ENCODE measurements at regions of chr1 and their contacts with region 1.

Region 1: DNA sequence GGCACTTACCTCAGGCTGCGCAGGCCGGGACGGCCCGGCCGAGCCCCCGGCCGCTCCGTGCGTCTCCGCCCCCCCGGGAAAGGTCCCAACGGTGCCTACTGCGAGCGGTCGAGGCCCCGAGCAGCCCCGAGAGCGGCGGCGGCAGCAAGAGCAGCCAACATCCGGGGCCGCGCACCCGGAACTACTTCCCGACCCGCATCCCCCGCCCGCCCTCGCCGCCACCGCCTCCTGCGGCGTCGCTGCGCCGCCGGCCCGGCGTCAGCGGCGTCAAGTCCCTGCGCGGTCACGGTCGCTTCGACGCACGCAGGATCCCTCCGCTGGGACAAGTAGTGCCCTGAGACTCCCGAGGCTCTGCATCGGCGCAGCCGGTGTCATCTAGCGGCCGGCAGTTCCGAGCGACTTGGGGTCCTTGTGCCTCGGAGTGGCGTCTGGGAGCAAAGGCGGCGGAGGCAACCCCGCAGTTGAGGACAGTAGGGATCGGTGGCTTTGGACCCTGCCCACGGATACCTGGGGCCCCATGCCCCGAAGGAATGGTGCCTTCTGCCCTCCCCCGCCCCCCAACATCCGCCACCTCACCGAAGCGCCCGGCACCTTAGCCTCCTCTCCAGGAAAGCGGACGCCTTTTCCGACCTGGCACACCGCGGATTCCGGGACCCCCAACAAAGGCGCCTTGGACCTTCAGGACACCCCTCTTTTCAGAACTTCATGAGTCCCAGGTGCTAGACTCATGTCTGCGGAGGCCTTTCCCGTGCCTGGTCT is at the start of gene FOXJ3:
- DNase-seq: peak; percentile 94
- ATAC-seq: peak; percentile 95 to 97
- total RNA-seq, gene FOXJ3: 34.3 to 43.0 TPM

Region 2: GRCh38 chr1:42173155-42173933 is 161.9 kb before region 1 on chr1:
- intact Hi-C with region 1: loop called (anchors 5 kb)
- DNase-seq: peak; percentile 60
- ATAC-seq: peak; percentile 66 to 67

Region 3: GRCh38 chr1:42430286-42431135 is 95.3 kb after region 1 on chr1:
- intact Hi-C with region 1: no loop called
- DNase-seq: no peak
- ATAC-seq: no peak

Region 4: GRCh38 chr1:42456010-42456758 is 121.0 kb after region 1 on chr1 and contains the starts of genes PPCS and ZMYND12:
- intact Hi-C with region 1: loop called in 1 of 2 experiments (anchors 10 kb)
- DNase-seq: peak; percentile 90
- ATAC-seq: peak; percentile 95 to 98
- total RNA-seq, gene PPCS: 33.5 to 36.8 TPM
- total RNA-seq, gene ZMYND12: 0.31 to 0.65 TPM

Region 5: DNA sequence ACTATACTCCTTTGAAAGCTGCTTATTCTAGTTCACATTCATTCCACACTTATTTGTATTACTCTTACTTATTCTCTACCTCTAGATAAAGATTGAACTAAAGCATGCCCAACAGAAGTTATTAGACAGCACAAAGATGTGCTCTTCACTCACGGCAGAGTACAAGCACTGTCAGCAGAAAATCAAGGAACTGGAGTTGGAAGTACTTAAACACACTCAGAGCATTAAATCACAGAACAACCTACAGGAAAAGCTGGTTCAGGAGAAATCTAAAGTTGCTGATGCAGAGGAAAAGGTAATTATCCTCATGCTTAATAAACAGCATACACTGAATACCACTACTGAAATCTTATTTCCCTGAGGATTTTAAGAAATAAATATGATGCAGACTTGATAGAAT is 241.7 kb after region 1 on chr1:
- intact Hi-C with region 1: loop called in 1 of 2 experiments (anchors 10 kb)
- DNase-seq: no peak
- ATAC-seq: no peak

Region 6: DNA sequence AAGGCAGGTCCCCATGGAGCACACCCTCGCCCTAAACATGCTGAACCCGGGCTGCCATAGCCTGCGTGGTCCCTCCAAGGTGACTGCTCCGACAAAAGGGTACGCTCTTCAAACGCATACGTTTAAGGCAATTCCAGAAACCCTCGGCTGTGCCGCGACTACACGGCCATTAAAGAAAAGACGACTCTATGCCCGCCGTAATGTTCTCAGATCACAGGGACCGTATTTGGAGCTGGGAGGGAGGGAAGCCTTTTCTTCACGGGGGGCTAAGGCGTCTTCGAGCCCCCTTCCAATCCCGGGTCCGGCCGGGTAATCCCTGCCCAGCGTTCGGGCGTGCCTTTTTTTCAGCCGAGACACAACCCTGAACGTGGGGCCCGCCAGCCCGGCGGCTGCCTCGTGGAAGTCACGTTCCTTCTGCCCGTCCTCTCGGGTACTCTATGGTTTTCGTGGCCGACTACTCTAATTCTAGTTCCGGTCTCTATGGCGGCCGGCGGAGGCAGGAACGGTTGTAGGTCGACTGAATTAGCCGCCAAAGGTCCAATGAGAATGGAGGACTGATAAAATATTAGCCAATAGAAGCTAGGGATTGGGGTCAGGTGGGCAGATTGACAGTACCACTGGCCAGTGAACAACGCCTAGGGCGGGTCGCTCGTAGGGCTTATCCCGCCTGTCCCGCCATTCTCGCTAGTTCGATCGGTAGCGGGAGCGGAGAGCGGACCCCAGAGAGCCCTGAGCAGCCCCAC is 346.7 kb after region 1 on chr1 and contains the start of gene YBX1:
- intact Hi-C with region 1: loop called in 1 of 2 experiments (anchors 10 kb)
- DNase-seq: peak; percentile 96
- ATAC-seq: peak; percentile 98
- total RNA-seq, gene YBX1: 764 to 775 TPM

Region 7: DNA sequence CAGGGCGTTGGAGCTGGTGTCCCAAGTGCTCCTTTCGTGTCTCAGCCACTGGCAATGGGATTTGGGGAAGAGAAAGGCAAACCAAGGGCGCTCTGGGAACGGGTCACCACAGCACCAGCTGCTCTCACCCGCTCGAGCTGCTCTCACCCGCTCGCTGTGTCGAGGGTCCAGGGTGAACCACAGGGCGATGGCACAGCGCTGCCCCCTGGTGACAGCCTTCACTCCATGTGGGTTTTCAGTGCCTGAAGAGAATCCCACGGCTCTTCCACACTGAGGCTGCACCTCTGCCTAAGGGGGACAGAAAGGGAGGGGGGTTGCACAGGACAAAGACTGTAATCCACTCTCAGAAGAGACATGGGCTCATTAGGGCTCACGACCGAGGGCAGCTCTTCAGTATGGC is 411.9 kb after region 1 on chr1:
- intact Hi-C with region 1: loop called in 1 of 2 experiments (anchors 10 kb)
- DNase-seq: peak; percentile 52
- ATAC-seq: peak; percentile 60 to 70

Measured in left cardiac atrium (tissue), 4 donors.